Calu3 (cell line): ENCODE measurements at regions of chr2 and their contacts with region 1.

Region 1: DNA sequence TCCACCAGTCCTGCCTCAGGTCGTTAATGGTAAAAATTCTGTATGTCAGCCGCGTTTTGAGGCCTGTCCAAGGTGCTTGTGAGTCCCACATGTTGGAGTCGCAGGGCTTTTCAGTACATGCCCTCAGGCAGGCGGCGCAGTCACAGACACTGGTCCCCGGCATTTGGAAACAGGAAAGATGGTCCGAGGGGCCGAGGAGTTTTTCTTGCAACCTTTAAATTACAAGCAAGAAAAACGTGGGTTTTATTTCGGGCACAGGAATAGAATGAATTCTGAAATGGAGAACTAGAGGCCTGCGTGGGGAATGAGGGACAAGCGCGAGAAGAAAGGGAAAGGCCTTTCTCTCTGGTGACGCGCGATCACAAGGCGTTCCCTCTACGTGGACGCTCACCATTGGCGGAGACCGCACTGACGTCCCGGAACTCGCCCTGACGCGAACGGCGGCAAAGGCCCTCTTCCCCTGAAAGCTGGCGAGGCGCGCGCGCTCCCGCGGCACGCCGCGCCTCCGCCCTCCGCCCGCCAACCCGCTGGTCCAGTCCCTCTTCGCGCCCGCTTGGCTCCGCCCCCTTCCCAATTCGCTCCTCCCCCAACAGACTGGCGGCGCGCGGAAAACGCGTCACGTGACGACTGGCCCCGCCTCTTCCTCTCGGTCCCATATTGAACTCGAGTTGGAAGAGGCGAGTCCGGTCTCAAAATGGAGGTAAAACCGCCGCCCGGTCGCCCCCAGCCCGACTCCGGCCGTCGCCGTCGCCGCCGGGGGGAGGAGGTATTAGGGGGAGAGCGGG is at the start of gene HNRNPA3:
- DNase-seq: peak; percentile 99
- H3K4me3 Mint-ChIP-seq: peak within 1 kb of the TSS; percentile 85
- H3K27ac Mint-ChIP-seq: peak within 1 kb of the TSS; percentile 100
- H3K4me1 Mint-ChIP-seq: peaks cover 23% of the 10 kb centered on the region
- H3K27me3 Mint-ChIP-seq: peaks cover 13% of the 10 kb centered on the region
- CTCF ChIP-seq: no peak
- total RNA-seq, gene HNRNPA3: 212 and 234 TPM in 2 replicates

Region 2: GRCh38 chr2:177056481-177056929 is 155.8 kb before region 1 on chr2:
- CTCF ChIA-PET with region 1: no interaction called
- intact Hi-C with region 1: no loop called
- DNase-seq: no peak
- H3K4me3 Mint-ChIP-seq: no peak overlapping the region
- H3K27ac Mint-ChIP-seq: no peak overlapping the region
- H3K4me1 Mint-ChIP-seq: no peaks in the 10 kb centered on the region
- H3K27me3 Mint-ChIP-seq: peaks cover 23% of the 10 kb centered on the region
- CTCF ChIP-seq: no peak

Region 3: DNA sequence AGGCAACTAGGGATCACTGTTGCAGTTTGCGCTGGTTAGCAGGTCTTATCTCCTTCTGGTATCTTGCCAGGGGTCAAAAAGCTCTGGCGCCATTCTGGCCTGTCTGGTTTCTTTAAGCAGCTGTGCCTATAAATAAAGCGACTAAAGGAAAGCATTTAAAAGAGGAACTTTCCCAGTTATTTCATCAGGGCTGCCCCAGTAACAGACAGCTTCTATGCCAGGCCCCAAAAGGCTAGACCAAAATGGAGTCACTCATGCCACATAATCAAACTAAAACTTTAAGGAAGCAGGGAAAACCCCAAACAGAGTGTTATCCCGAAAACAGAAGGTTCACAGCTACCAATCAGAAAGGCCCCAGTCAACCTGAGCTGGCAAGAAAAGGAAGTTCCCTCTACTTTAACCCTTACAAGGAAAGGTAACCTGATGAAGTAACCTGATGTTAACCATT is 40.9 kb before region 1 on chr2:
- CTCF ChIA-PET with region 1: interaction called, 14 read pairs
- intact Hi-C with region 1: loop called (anchors 1 kb)
- DNase-seq: peak; percentile 48
- H3K4me3 Mint-ChIP-seq: no peak overlapping the region
- H3K27ac Mint-ChIP-seq: peak overlapping the region; percentile 73
- H3K4me1 Mint-ChIP-seq: peaks cover 66% of the 10 kb centered on the region
- H3K27me3 Mint-ChIP-seq: no peaks in the 10 kb centered on the region
- CTCF ChIP-seq: no peak

Region 4: GRCh38 chr2:177187631-177188312 is 24.5 kb before region 1 on chr2:
- CTCF ChIA-PET with region 1: no interaction called
- intact Hi-C with region 1: loop called (anchors 2 kb)
- DNase-seq: peak; percentile 65
- H3K4me3 Mint-ChIP-seq: peak overlapping the region; percentile 2
- H3K27ac Mint-ChIP-seq: peak overlapping the region; percentile 67
- H3K4me1 Mint-ChIP-seq: peaks cover 30% of the 10 kb centered on the region
- H3K27me3 Mint-ChIP-seq: no peaks in the 10 kb centered on the region
- CTCF ChIP-seq: no peak